ENCODE measurements at regions of chr15 and their contacts with region 1.

Region 1: DNA sequence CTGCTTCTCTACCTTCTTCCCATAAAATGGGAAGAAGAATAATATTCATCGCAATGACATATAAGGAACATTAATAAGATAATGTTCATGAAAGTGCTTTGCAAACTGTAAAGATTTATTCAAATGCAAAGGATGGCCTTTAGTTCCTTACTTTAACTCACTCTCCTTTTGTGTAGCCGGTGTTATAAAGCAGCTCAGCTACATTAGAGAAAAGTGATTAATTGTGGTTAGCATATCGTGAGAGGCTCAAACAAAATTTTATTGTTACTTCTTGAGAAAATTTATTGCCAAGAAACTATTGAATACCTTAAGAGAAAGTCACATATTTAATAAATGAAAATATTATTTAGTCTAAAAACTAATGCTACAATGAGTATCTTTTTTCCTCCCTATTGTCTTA is 250.7 kb upstream of the NR2E3 start:
- DNase-seq: no peak
- H3K4me3 ChIP-seq: no peak overlapping the region
- CTCF ChIP-seq: no peak
- POLR2A ChIP-seq: no peak

Region 2: DNA sequence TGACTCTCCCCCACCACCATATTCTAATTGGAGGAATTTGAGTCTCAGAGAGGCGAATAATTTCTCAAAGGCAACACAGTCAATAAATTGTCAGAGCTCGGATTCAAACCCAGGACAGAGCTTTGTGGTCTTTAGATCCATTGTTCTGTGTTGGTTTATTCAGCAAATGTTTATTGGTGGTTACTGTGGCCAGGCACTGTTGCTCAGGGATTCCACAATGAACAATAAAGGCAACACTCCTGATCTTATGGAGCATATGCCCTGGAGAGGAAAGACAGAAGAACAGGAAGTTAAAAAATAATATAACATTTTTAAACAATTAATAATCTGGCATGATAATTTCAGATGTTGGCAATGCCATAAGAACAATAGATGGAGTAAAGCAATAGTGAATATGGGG is 41.0 kb before region 1 on chr15:
- intact Hi-C with region 1: loop called (anchors 2 kb)
- DNase-seq: no peak
- H3K4me3 ChIP-seq: no peak overlapping the region
- CTCF ChIP-seq: no peak
- POLR2A ChIP-seq: no peak

Region 3: GRCh38 chr15:71547011-71547410 is 12.6 kb before region 1 on chr15:
- intact Hi-C with region 1: no loop called
- DNase-seq: no peak
- H3K4me3 ChIP-seq: peak overlapping the region; percentile 1
- CTCF ChIP-seq: no peak
- POLR2A ChIP-seq: no peak

Region 4: GRCh38 chr15:71588746-71589145 is 29.1 kb after region 1 on chr15:
- intact Hi-C with region 1: no loop called
- DNase-seq: no peak
- H3K4me3 ChIP-seq: no peak overlapping the region
- CTCF ChIP-seq: no peak
- POLR2A ChIP-seq: no peak

Region 5: GRCh38 chr15:73403171-73403570 is 1843.6 kb after region 1 on chr15:
- intact Hi-C with region 1: no loop called
- DNase-seq: no peak
- H3K4me3 ChIP-seq: no peak overlapping the region
- CTCF ChIP-seq: no peak
- POLR2A ChIP-seq: no peak